WTC11 (cell line): ENCODE measurements at regions of chr16 and their contacts with region 1.

Region 1: DNA sequence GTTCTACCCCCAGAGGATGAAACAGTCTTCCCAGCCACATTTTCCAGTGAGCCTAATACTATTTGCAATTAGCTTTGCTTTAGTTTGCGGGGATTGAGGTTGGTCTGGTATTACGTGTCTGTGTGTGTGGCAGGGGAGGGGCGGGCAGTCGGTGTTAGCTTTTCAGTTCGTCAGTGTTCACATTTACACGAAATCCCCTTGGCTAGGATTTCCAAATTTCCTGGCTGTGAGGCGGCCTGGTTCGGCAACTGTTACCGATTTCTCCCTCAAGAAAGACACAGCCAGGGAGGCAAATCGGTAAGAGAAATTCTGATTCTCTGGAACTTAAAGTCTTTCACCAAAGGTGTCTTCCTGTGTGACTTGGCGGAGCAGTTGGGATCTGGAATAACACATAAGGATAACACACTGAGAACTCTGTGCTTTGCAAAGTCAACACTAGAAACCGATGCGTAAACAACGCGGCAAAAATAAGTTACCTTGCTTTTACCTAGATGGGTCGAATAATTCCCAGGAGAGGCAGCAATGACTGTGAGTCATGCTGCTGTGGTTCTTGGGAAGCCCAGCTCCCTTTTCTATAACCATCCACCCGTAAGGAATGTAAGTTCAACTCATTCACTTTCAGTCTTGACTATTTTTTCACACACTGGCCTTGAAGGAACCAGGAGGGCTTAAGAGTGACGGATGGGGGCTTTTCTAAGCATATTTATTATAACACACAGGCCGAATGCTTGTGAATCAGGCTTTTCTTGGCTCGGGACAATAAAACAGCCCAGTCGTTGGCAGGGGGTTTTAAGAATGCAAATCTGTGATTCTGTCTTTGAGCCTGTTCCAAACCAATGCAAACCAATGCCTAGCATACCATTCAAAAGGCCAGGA is 24.2 kb downstream of the GPRC5B start:
- DNase-seq: no peak
- ATAC-seq: peak; percentile 79
- H3K4me3 Mint-ChIP-seq: peak overlapping the region; percentile 51
- H3K27ac Mint-ChIP-seq: peak overlapping the region; percentile 100
- H3K4me1 Mint-ChIP-seq: peaks cover 87% of the 10 kb centered on the region
- H3K27me3 Mint-ChIP-seq: no peaks in the 10 kb centered on the region
- CTCF ChIP-seq: no peak

Region 2: DNA sequence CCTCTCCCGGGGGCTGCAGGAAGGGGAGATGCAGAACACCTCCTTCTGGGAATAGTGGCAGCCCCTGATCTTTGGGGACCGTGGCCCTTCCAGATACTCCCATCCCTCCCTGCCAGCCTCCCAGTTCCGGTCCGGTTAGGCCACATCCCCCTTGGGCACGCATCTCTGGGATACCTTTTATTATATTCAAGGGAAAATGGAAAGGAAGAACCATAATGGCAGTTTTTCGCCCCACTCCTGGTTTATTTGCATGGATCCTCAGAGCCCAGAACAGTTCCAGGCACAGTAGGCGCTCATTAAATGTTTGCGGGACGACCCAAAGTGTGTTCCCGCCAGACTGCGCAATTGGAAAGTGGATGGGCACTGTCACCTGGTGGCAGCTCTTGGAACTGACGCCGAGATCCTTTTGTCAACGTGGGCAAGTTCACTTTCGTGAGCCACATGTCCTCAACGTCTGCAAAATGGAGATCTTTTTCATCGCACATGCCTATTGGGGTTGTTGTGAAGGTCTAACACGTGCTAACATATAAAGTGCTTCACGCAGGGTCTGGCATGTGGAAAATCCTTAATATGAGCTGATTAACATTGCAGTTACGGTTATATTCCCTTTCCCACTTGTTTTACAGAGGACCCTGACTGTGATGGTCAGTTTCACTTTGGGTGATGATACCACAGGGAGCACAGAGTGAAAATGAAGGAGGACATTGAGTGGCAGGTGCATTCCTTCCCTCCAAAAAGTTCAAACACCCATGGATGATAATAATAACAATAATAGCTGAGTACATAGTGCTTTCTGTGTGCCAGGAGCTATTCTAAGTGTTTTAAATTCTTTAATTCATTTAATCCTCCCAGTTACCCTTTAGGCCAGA is 25.9 kb after region 1 on chr16:
- CTCF ChIA-PET with region 1: interaction called, 10 read pairs
- POLR2A ChIA-PET with region 1: interaction called, 13 read pairs
- DNase-seq: peak; percentile 87
- ATAC-seq: peak; percentile 8
- H3K4me3 Mint-ChIP-seq: peak overlapping the region; percentile 74
- H3K27ac Mint-ChIP-seq: no peak overlapping the region; the same call in 1 of the 2 replicates
- H3K4me1 Mint-ChIP-seq: peaks cover 31% of the 10 kb centered on the region
- H3K27me3 Mint-ChIP-seq: peaks cover 19% of the 10 kb centered on the region
- CTCF ChIP-seq: peak; percentile 97